CD8-positive, alpha-beta T cell (primary cell): ENCODE measurements at regions of chr16 and their contacts with region 1.

Region 1: DNA sequence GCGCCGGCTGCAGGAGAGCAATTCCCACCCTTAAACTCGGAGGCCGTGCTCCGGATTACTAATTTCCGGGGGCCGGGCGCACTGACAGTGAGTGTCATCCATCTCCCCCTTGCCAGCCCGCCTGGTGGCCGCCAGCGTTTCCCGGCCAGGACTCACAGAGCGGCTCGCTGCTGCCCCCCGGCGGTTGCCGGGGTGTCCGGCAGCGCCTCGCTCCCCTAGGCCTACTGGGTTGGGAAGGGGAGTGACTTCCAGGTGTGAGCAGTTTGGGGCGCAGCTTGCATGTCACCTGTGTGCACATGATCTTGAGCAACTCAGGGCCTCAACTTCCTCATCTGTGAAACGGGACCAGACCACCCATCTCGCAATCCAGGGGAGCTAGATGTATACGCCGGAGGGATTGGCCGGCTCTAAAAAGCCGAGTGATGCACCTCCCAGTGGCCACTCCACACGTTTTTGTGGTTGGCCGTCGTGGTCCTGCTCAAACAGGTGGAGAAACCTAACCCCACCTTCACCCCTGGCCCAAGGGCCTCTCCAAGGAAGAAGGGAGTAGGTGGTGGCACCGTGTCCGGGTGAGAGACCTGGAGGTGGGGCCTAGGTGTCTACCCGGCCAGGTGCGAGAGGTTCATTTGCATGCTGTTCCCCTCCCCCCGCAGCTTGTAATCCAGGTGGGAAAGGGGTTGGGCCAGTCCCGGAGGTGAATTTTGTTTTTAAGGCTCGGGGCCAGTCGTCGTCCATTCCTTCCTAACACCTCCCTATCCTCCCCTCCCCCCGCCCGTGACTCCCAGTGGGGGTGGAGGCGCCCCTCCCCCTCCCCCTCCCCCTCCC is 2.4 kb upstream of the GSE1 start:
- DNase-seq: peak; percentile 77 to 95 (median 89)
- ATAC-seq: peak; percentile 62
- H3K4me3 ChIP-seq: peak overlapping the region; percentile 26 to 28
- H3K4me3 Mint-ChIP-seq: peak overlapping the region; percentile 82
- H3K27ac ChIP-seq: peak overlapping the region in 1 of 2 experiments; percentile 49
- H3K27ac Mint-ChIP-seq: peak overlapping the region; percentile 70
- H3K4me1 ChIP-seq: peaks cover 44% of the 10 kb centered on the region
- H3K4me1 Mint-ChIP-seq: peaks cover 46% of the 10 kb centered on the region
- H3K27me3 ChIP-seq: no peaks in the 10 kb centered on the region
- H3K27me3 Mint-ChIP-seq: no peaks in the 10 kb centered on the region
- CTCF ChIP-seq: peak; percentile 94

Region 2: DNA sequence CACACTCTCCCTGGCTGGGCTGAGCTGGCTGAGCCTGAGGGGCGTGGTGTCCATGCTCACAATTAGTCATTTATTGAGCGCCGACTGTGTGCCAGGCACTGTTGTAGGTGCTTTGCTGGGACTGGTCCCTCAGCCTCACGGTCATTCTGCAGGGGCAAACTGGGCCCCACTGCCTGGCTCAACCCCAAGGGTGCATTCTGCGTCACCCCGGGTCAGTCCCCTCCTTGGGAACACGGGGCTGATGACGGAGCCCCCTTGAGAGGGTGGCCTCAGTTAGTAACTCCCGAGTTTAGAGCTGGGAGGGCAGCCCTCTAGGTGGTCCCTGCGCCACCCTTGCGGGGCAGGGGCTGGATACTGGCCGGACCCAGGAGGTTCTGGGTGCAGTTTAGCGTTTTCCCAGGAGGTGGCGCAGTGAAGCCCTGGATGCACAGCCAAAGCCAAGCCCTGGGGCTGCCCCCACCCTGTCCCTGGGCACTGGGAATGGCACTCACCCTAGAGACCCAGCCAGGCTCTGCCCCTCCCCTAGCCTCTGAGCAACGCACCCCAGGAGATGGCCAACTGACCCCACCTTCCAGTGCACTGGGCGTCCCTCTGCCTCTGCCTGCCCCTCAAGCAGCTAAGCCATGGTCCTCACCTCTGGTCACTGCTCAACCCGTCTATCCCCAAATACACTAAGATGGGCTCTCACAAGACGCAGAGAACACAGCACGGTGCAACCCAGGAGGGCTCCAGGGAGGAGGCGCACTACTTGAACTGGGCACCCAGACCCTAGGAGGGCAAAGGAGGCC is 240.8 kb before region 1 on chr16:
- CTCF ChIA-PET with region 1: interaction called, 15 read pairs
- POLR2A ChIA-PET with region 1: no interaction called
- intact Hi-C with region 1: loop called in 1 of 2 experiments (anchors 1 kb)
- DNase-seq: peak; percentile 16 to 67 (median 48)
- ATAC-seq: peak; percentile 78
- H3K4me3 ChIP-seq: no peak overlapping the region
- H3K4me3 Mint-ChIP-seq: no peak overlapping the region
- H3K27ac ChIP-seq: no peak overlapping the region
- H3K27ac Mint-ChIP-seq: no peak overlapping the region
- H3K4me1 ChIP-seq: no peaks in the 10 kb centered on the region
- H3K4me1 Mint-ChIP-seq: no peaks in the 10 kb centered on the region
- H3K27me3 ChIP-seq: no peaks in the 10 kb centered on the region
- H3K27me3 Mint-ChIP-seq: no peaks in the 10 kb centered on the region
- CTCF ChIP-seq: peak; percentile 72

Region 3: DNA sequence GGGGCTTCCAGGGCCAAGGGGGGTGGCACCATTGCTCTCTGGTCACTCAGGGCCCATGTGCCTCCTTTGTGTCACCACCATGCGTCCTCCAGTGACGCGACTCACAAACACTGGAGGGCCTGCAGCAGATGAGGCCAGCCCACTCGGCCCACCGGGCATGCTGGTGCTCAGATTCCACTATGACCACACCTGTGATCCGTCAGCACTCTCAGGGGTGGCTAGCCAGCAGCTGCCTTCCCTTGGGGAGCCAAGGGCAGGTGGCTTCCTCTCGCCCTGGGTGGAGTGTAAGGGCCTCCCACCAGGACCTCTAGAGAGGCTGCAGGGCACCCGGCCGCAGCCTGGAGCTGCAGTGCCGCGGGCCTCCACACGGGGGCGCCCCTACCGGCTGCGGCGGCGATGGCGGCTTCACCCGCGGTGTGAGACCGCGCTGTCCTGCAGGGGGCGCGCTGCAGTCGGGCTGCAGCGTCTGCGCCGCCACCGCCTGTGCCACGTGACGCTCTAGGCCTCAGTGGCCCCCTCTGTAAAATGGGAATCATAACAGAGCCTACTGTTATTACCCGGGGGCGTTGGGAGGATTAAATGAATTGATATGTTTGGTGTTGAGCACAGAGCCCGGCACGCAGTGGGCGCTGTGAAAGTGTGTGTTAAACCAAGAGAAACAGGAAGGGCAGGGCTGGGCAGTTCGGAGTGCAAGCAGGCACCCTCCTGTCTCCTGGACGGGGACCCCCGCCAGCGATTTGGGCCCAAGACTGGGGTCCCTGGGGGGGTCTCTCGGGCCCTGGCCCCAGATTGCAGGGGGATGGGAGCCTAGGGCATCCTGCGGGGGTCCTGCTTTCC is 190.0 kb before region 1 on chr16:
- CTCF ChIA-PET with region 1: interaction called, 100 read pairs
- POLR2A ChIA-PET with region 1: interaction called, 10 read pairs
- intact Hi-C with region 1: loop called (anchors 1 kb)
- DNase-seq: peak; percentile 60 to 87 (median 72)
- ATAC-seq: peak; percentile 91
- H3K4me3 ChIP-seq: no peak overlapping the region
- H3K4me3 Mint-ChIP-seq: no peak overlapping the region
- H3K27ac ChIP-seq: no peak overlapping the region
- H3K27ac Mint-ChIP-seq: no peak overlapping the region
- H3K4me1 ChIP-seq: peaks cover 7% of the 10 kb centered on the region
- H3K4me1 Mint-ChIP-seq: peaks cover 2% of the 10 kb centered on the region
- H3K27me3 ChIP-seq: no peaks in the 10 kb centered on the region
- H3K27me3 Mint-ChIP-seq: peaks cover 2% of the 10 kb centered on the region
- CTCF ChIP-seq: peak; percentile 100

Region 4: GRCh38 chr16:85448557-85449197 is 162.0 kb before region 1 on chr16:
- CTCF ChIA-PET with region 1: interaction called, 56 read pairs
- POLR2A ChIA-PET with region 1: interaction called, 38 read pairs
- intact Hi-C with region 1: loop called in 1 of 2 experiments (anchors 1 kb)
- DNase-seq: peak; percentile 34 to 90 (median 71)
- ATAC-seq: peak; percentile 83
- H3K4me3 ChIP-seq: peak overlapping the region; percentile 0 to 39
- H3K4me3 Mint-ChIP-seq: peak overlapping the region; percentile 70
- H3K27ac ChIP-seq: peak overlapping the region; percentile 52 to 64
- H3K27ac Mint-ChIP-seq: peak overlapping the region; percentile 97
- H3K4me1 ChIP-seq: peaks cover 76% of the 10 kb centered on the region
- H3K4me1 Mint-ChIP-seq: peaks cover 61% of the 10 kb centered on the region
- H3K27me3 ChIP-seq: no peaks in the 10 kb centered on the region
- H3K27me3 Mint-ChIP-seq: no peaks in the 10 kb centered on the region
- CTCF ChIP-seq: no peak

Region 5: DNA sequence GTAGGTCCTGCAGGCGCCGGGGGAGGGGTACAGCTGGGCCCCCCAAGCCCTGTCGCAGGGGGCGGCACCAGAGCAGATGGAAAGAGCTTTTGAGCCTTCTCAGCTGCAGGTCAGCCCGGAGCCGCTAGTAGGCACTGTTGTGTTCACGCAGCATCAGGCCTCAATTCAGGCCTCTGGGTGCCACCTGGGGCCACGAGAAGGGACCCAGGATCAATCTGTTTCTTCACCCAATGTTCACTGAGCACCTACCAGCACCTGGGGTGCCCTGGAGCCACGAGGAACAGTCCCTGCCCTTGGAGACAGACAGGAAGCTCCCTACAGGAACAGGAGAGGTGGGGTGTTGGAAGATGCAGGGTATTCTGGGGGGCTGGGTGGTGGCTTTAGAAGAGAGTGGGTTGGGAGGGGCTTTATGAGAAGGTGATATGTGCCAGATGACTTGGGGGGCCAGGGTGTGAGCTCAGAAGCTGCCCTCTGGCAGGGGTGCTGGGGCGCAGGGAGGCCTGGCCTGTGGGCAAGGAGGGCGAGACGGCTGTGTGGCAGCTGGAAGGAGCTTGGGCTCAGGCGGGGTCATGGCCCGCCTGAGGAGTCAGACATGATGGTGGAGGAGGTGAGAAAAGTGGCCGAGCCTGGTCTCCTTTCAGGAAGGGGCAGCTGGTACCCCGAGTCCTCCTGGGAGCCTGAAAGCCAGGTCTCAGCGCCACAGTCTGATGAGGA is 119.5 kb before region 1 on chr16:
- CTCF ChIA-PET with region 1: interaction called, 21 read pairs
- POLR2A ChIA-PET with region 1: no interaction called
- intact Hi-C with region 1: loop called in 1 of 2 experiments (anchors 2 kb)
- DNase-seq: peak; percentile 3 to 67 (median 46)
- ATAC-seq: peak; percentile 54
- H3K4me3 ChIP-seq: no peak overlapping the region
- H3K4me3 Mint-ChIP-seq: no peak overlapping the region
- H3K27ac ChIP-seq: no peak overlapping the region
- H3K27ac Mint-ChIP-seq: no peak overlapping the region
- H3K4me1 ChIP-seq: peaks cover 19% of the 10 kb centered on the region
- H3K4me1 Mint-ChIP-seq: peaks cover 18% of the 10 kb centered on the region
- H3K27me3 ChIP-seq: no peaks in the 10 kb centered on the region
- H3K27me3 Mint-ChIP-seq: no peaks in the 10 kb centered on the region
- CTCF ChIP-seq: peak; percentile 50

Region 6: GRCh38 chr16:85554112-85554813 is 56.5 kb before region 1 on chr16:
- CTCF ChIA-PET with region 1: interaction called, 33 read pairs
- POLR2A ChIA-PET with region 1: interaction called, 11 read pairs
- intact Hi-C with region 1: loop called (anchors 1 kb)
- DNase-seq: peak; percentile 43 to 95 (median 75)
- ATAC-seq: peak; percentile 39
- H3K4me3 ChIP-seq: peak overlapping the region; percentile 58 to 94
- H3K4me3 Mint-ChIP-seq: peak overlapping the region; percentile 93
- H3K27ac ChIP-seq: peak overlapping the region; percentile 56 to 85
- H3K27ac Mint-ChIP-seq: peak overlapping the region; percentile 92
- H3K4me1 ChIP-seq: peaks cover 27% of the 10 kb centered on the region
- H3K4me1 Mint-ChIP-seq: peaks cover 37% of the 10 kb centered on the region
- H3K27me3 ChIP-seq: no peaks in the 10 kb centered on the region
- H3K27me3 Mint-ChIP-seq: no peaks in the 10 kb centered on the region
- CTCF ChIP-seq: no peak

Region 7: DNA sequence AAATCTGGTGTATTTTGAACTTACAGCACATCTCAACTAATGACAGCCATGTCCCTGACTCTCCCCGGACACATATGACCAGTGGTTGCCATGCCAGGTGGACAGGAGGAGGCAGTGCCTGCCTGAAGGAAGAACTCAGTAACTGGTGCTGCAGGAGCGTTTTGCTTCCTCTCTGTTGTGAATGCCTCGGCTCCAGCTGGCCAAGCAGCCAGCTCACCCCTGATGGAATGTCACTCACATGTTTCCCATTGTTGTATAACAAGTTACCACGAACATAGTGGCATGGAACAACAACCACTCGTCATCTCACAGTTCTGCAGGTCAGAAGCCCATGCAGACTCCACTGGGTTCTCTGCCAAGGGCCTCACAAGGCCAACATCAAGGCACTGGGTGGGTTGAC is 268.2 kb after region 1 on chr16:
- CTCF ChIA-PET with region 1: no interaction called
- POLR2A ChIA-PET with region 1: no interaction called
- intact Hi-C with region 1: no loop called
- DNase-seq: no peak
- ATAC-seq: no peak
- H3K4me3 ChIP-seq: no peak overlapping the region
- H3K4me3 Mint-ChIP-seq: no peak overlapping the region
- H3K27ac ChIP-seq: no peak overlapping the region
- H3K27ac Mint-ChIP-seq: no peak overlapping the region
- H3K4me1 ChIP-seq: no peaks in the 10 kb centered on the region
- H3K4me1 Mint-ChIP-seq: no peaks in the 10 kb centered on the region
- H3K27me3 ChIP-seq: no peaks in the 10 kb centered on the region
- H3K27me3 Mint-ChIP-seq: no peaks in the 10 kb centered on the region
- CTCF ChIP-seq: no peak